ENCODE measurements at regions of chr1 and their contacts with region 1.

Region 1: DNA sequence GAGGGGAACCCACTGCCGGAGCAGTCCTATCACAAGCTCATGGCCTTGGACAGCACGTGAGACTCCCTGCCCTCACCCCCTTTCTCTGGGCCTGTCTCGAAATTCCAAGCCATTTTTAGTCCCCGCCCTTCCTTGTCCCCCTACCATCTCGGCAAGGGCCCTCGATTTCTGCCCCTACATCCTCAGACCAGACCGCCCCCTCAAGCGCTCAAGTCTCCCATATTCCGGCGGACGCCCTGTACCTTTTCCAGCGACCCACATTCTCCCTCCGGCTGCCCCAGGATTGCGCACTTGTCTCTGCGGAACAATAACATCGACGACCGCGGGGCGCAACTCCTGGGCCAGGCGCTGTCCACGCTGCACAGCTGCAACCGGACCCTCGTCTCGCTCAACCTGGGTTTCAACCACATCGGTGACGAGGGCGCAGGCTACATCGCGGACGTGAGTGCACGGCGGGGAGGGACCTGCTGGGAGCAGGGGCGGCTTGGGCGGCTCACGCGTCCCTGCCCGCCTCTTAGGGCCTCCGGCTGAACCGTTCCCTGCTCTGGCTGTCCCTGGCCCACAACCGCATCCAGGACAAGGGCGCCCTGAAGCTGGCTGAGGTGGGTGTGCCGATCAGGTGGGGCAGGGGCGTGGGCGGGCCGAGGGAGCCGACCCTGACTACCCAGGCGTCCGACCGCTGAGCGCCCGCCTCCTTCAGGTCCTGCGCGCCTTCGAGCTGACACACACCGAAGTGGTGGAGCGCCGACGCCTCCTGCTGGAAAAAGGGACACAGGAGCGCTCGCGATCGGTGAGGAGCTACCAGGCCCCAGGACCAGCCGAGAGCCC is 7.0 kb downstream of the LRRC71 start:
- DNase-seq: peak; percentile 62
- H3K4me3 Mint-ChIP-seq: peak overlapping the region; percentile 55
- H3K27ac Mint-ChIP-seq: no peak overlapping the region
- H3K4me1 Mint-ChIP-seq: peaks cover 23% of the 10 kb centered on the region
- H3K27me3 Mint-ChIP-seq: peaks cover 75% of the 10 kb centered on the region

Region 2: DNA sequence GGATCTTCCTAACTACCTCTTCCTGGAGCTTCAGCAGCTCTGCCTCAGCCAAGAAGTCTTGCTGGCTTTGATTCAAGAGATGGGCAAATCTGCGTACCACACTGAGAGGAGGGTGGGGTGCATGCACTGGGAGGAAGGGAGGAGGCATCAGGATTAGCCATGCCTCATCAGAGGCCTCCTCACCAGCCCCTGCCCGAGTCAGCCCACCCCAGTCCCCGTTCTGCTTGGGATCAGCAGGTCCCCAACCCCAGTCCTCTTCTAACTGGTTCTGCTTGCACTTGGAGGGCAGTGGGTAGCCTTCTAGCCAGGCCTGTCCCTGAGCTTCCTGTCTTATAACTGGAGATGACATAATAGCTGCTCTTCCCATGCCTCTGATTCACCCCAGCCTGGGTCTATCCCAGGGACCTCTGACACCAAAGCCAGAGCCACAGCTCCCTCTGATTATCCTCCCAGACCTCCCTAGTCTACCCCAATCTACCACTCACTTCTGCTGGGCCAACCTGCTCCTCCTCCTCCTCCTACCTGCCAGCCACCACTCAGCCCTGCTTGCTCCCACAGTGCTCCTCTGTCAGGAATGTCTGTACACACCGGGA is 386.5 kb before region 1 on chr1:
- intact Hi-C with region 1: no loop called
- DNase-seq: no peak
- H3K4me3 Mint-ChIP-seq: no peak overlapping the region
- H3K27ac Mint-ChIP-seq: peak overlapping the region; percentile 13
- H3K4me1 Mint-ChIP-seq: peaks cover 11% of the 10 kb centered on the region
- H3K27me3 Mint-ChIP-seq: no peaks in the 10 kb centered on the region

Region 3: GRCh38 chr1:156689035-156689952 is 238.1 kb before region 1 on chr1:
- intact Hi-C with region 1: loop called (anchors 5 kb)
- DNase-seq: peak; percentile 64
- H3K4me3 Mint-ChIP-seq: peak overlapping the region; percentile 69
- H3K27ac Mint-ChIP-seq: no peak overlapping the region
- H3K4me1 Mint-ChIP-seq: peaks cover 32% of the 10 kb centered on the region
- H3K27me3 Mint-ChIP-seq: peaks cover 54% of the 10 kb centered on the region

Region 4: GRCh38 chr1:156705918-156706656 is 221.3 kb before region 1 on chr1:
- intact Hi-C with region 1: loop called (anchors 5 kb)
- DNase-seq: peak; percentile 47
- H3K4me3 Mint-ChIP-seq: peak overlapping the region; percentile 85
- H3K27ac Mint-ChIP-seq: peak overlapping the region; percentile 29
- H3K4me1 Mint-ChIP-seq: peaks cover 24% of the 10 kb centered on the region
- H3K27me3 Mint-ChIP-seq: peaks cover 43% of the 10 kb centered on the region

Region 5: DNA sequence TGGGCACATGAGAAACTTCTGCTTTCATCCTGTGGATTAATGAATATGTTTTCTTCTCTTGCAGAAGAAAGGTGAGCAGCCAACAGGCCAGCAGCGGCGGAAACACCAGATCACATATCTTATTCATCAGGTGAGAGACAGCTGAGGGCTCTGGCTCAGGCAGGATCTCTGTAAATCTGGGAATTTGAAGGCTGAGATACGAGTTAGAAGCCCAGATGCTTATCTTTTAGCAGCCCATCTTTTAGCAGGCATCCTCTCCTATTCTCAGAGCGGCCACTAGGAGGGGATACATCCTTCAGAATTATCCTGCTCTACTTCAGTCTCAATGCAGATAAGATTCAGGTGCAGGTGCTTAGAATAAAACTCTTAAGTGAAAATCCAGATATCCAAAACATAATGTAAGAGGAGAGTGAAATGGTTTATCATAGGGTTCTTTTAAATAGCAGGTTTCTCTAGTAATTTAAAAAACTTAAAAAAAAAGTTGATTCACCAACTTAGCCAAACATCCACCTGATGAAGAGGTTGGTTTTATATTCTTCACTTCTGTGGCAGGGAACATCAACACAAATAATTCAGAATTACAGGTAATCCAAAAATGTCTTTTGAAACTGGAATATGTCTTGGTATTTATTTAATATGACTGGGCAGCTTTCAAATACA is 130.1 kb before region 1 on chr1:
- intact Hi-C with region 1: loop called (anchors 2 kb)
- DNase-seq: peak; percentile 43
- H3K4me3 Mint-ChIP-seq: no peak overlapping the region
- H3K27ac Mint-ChIP-seq: no peak overlapping the region
- H3K4me1 Mint-ChIP-seq: peaks cover 27% of the 10 kb centered on the region
- H3K27me3 Mint-ChIP-seq: no peaks in the 10 kb centered on the region

Region 6: DNA sequence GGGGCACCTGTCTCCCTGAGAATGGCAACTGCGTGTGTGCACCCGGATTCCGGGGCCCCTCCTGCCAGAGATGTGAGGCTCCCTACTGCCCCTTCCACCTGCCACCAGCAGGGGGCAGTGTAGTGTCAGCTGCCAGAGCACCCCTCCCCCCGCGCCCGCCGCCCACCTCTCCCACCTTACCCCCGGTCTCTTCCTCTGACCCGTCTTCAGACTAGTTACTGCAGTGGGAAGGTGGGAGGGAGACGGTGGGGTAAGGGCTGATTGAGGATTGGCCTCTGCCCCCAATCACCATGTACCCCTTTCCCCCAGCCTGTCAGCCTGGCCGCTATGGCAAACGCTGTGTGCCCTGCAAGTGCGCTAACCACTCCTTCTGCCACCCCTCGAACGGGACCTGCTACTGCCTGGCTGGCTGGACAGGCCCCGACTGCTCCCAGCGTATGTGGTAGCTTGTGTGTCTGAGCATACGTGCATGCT is 17.1 kb before region 1 on chr1:
- intact Hi-C with region 1: loop called (anchors 2 kb)
- DNase-seq: peak; percentile 45
- H3K4me3 Mint-ChIP-seq: no peak overlapping the region
- H3K27ac Mint-ChIP-seq: peak overlapping the region; percentile 34
- H3K4me1 Mint-ChIP-seq: no peaks in the 10 kb centered on the region
- H3K27me3 Mint-ChIP-seq: peaks cover 15% of the 10 kb centered on the region

Region 7: DNA sequence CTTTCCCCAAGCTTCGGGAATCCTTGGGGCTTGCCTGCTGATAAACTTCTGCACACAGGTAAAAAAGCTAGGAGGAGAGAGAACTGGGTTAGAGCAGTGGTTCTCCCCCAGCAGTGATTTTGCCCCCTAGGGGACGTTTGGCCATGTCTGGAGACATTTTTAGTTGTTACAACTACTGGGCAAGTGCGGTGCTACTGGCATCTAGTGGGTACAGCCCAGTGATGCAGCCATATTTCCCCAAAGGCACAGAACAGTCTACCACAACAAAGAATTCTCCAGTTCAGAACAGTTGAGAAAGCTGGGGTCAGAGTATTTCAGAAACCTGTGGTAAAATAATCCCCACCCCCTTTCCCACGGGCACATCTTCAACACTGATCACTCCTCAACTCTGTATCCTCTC is 34.3 kb after region 1 on chr1:
- intact Hi-C with region 1: no loop called
- DNase-seq: peak; percentile 30
- H3K4me3 Mint-ChIP-seq: no peak overlapping the region
- H3K27ac Mint-ChIP-seq: no peak overlapping the region
- H3K4me1 Mint-ChIP-seq: peaks cover 61% of the 10 kb centered on the region
- H3K27me3 Mint-ChIP-seq: peaks cover 8% of the 10 kb centered on the region

Measured in activated T-helper 1 cell treated with anti-CD3 and anti-CD28 coated beads, Interleukin-12 subunit alpha, Interleukin-12 subunit beta, Interleukin-2, Interleukin-4 antibody, amounts not matched to agents 30 ng/mL and 10 ng/mL and 1 ng/mL, durations not matched to agents 14 hours and 24 hours and 36 hours (primary cell).